ENCODE measurements at regions of chr12 and their contacts with region 1.

Region 1: GRCh38 chr12:54368709-54369583 is 4.7 kb upstream of the GPR84 start:
- DNase-seq: peak; percentile 88
- ATAC-seq: peak; percentile 94
- H3K4me3 ChIP-seq: peak overlapping the region in 2 of 5 experiments; percentile 35 to 38
- H3K4me3 Mint-ChIP-seq: peak overlapping the region; percentile 69
- H3K27ac ChIP-seq: no peak overlapping the region
- H3K27ac Mint-ChIP-seq: peak overlapping the region; percentile 68
- H3K4me1 ChIP-seq: peaks cover 10 to 25% of the 10 kb centered on the region in 2 donors
- H3K4me1 Mint-ChIP-seq: peaks cover 21% of the 10 kb centered on the region
- H3K27me3 ChIP-seq: no peaks in the 10 kb centered on the region
- H3K27me3 Mint-ChIP-seq: no peaks in the 10 kb centered on the region
- CTCF ChIP-seq: peak; percentile 81

Region 2: GRCh38 chr12:54220092-54220557 is 148.8 kb before region 1 on chr12:
- CTCF ChIA-PET with region 1: interaction called, 31 read pairs
- POLR2A ChIA-PET with region 1: no interaction called
- intact Hi-C with region 1: loop called (anchors 1 kb)
- DNase-seq: peak; percentile 81
- ATAC-seq: peak; percentile 40
- H3K4me3 ChIP-seq: no peak overlapping the region
- H3K4me3 Mint-ChIP-seq: no peak overlapping the region
- H3K27ac ChIP-seq: no peak overlapping the region
- H3K27ac Mint-ChIP-seq: no peak overlapping the region
- H3K4me1 ChIP-seq: peaks cover 30 to 35% of the 10 kb centered on the region in 2 donors
- H3K4me1 Mint-ChIP-seq: peaks cover 34% of the 10 kb centered on the region
- H3K27me3 ChIP-seq: peaks cover 0 to 6% (median 0%) of the 10 kb centered on the region in 4 experiments
- H3K27me3 Mint-ChIP-seq: no peaks in the 10 kb centered on the region
- CTCF ChIP-seq: peak; percentile 77

Region 3: DNA sequence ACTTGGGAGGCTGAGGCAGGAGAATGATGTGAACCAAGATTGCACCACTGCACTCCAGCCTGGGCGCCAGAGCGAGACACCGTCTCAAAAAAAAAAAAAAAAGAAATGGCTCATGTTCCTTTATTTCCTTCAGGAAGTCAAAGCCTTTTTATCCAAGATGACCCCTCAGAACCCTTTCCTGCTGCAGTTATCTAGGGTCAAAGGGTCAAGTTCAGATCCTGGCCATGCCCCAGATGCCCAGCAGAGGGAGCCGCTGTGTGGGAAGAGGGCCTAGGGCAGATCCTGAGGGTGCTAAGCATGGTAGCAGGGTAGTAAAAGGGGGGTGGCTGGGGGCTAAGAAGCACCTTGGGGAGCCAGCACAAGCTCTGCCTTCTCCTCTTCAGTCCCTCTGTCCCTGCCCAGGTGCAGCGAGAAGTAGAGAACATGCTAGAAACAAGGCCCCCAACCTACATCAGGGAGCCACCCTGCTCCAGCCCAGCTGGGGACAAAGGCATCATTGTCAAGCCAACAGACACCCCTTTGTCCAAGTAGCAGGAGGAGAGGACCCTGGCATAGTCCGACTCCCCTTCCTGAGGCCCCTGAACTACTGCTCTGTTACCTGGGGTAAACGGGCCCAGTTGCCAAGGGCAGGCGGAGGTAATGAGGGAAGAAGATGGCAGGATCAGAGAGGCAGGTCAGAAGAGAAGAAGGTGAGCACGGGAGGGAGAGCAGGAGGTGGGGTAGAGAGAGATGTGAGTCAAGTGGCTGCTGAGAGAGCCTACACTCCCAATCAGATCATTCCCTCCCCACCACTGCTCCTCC is 74.6 kb before region 1 on chr12:
- CTCF ChIA-PET with region 1: interaction called, 20 read pairs
- POLR2A ChIA-PET with region 1: no interaction called
- intact Hi-C with region 1: loop called (anchors 1 kb)
- DNase-seq: peak; percentile 59
- ATAC-seq: peak; percentile 74
- H3K4me3 ChIP-seq: no peak overlapping the region
- H3K4me3 Mint-ChIP-seq: no peak overlapping the region
- H3K27ac ChIP-seq: no peak overlapping the region
- H3K27ac Mint-ChIP-seq: no peak overlapping the region
- H3K4me1 ChIP-seq: peaks cover 15 to 18% of the 10 kb centered on the region in 2 donors
- H3K4me1 Mint-ChIP-seq: peaks cover 15% of the 10 kb centered on the region
- H3K27me3 ChIP-seq: peaks cover 0 to 16% (median 6%) of the 10 kb centered on the region in 4 experiments
- H3K27me3 Mint-ChIP-seq: peaks cover 15% of the 10 kb centered on the region
- CTCF ChIP-seq: peak; percentile 48

Region 4: GRCh38 chr12:54379401-54380201 is 10.7 kb after region 1 on chr12:
- CTCF ChIA-PET with region 1: interaction called, 32 read pairs
- POLR2A ChIA-PET with region 1: no interaction called
- intact Hi-C with region 1: loop called (anchors 1 kb)
- DNase-seq: peak; percentile 88
- ATAC-seq: peak; percentile 90
- H3K4me3 ChIP-seq: peak overlapping the region in 3 of 5 experiments; percentile 11 to 43 (median 40)
- H3K4me3 Mint-ChIP-seq: peak overlapping the region; percentile 77
- H3K27ac ChIP-seq: no peak overlapping the region
- H3K27ac Mint-ChIP-seq: peak overlapping the region; percentile 62
- H3K4me1 ChIP-seq: peaks cover 26 to 45% of the 10 kb centered on the region in 2 donors
- H3K4me1 Mint-ChIP-seq: peaks cover 35% of the 10 kb centered on the region
- H3K27me3 ChIP-seq: no peaks in the 10 kb centered on the region
- H3K27me3 Mint-ChIP-seq: no peaks in the 10 kb centered on the region
- CTCF ChIP-seq: peak; percentile 100

Region 5: DNA sequence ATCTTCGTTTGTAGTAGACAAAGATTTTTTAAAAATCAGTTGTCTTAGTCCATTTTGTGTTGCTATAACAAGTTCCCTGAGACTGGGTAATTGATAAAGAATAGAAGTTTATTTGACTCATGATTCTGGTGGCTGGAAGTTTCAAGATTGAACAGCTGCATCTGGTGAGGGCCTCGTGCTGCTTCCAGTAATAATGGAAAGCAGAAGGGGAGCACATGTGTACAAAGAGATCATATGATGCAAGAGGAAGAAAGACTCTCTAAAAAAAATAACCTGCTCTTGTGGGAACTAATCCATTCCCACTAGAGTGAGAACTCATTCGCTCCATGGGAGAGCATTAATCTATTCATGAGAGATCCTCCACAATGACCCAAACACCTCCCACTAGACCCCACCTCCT is 510.2 kb after region 1 on chr12:
- CTCF ChIA-PET with region 1: no interaction called
- POLR2A ChIA-PET with region 1: no interaction called
- intact Hi-C with region 1: no loop called
- DNase-seq: no peak
- ATAC-seq: no peak
- H3K4me3 ChIP-seq: no peak overlapping the region
- H3K4me3 Mint-ChIP-seq: no peak overlapping the region
- H3K27ac ChIP-seq: no peak overlapping the region
- H3K27ac Mint-ChIP-seq: no peak overlapping the region
- H3K4me1 ChIP-seq: no peaks in the 10 kb centered on the region
- H3K4me1 Mint-ChIP-seq: no peaks in the 10 kb centered on the region
- H3K27me3 ChIP-seq: peaks cover 0 to 2% (median 0%) of the 10 kb centered on the region in 4 experiments
- H3K27me3 Mint-ChIP-seq: peaks cover 3% of the 10 kb centered on the region
- CTCF ChIP-seq: no peak

Measured in B cell (primary cell).